ENCODE measurements at regions of chr17 and their contacts with region 1.

Region 1: GRCh38 chr17:35088881-35089585 is 25.5 kb upstream of the RFFL start:
- DNase-seq: peak; percentile 77 to 91 (median 84)
- H3K4me3 ChIP-seq: peak overlapping the region; percentile 57 to 99 (median 95)
- H3K27ac ChIP-seq: peak overlapping the region; percentile 89 to 100 (median 98)
- H3K27me3 ChIP-seq: no peaks in the 10 kb centered on the region
- CTCF ChIP-seq: peak; percentile 37 to 96 (median 86)

Region 2: GRCh38 chr17:34980681-34981537 is 108.1 kb before region 1 on chr17:
- intact Hi-C with region 1: loop called (anchors 5 kb)
- DNase-seq: peak in 9 of 10 donors; percentile 41 to 73 (median 61)
- H3K4me3 ChIP-seq: peak overlapping the region; percentile 55 to 100 (median 95)
- H3K27ac ChIP-seq: peak overlapping the region; percentile 77 to 99 (median 94)
- H3K27me3 ChIP-seq: no peaks in the 10 kb centered on the region
- CTCF ChIP-seq: peak in 33 of 56 donors; percentile 13 to 54 (median 33)

Region 3: DNA sequence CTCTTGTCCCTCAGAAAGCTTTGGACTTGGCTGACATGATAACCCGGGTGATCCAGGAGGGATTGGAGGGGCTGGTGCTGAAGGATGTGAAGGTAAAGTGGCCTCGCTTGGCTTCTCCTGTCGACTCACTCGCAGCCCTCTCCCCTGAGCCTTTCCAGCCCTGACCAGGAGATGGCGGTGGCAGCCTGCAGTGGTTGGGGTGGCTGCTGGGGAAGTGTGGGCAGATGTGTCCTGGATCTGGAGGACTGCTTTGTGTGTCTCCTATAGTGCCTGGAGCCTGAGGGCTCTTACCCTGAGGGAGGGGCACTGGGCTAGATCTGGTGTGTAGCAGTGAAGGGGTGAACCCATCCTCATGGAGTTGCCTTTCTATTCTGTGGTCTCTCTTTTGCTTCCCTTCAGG is 90.8 kb before region 1 on chr17:
- intact Hi-C with region 1: loop called (anchors 2 kb)
- DNase-seq: peak in 9 of 10 donors; percentile 69 to 85 (median 75)
- H3K4me3 ChIP-seq: peak overlapping the region in 1 of 59 donors; percentile 2
- H3K27ac ChIP-seq: peak overlapping the region in 58 of 59 donors; percentile 0 to 100 (median 79)
- H3K27me3 ChIP-seq: no peaks in the 10 kb centered on the region
- CTCF ChIP-seq: peak in 55 of 56 donors; percentile 44 to 93 (median 80)

Region 4: DNA sequence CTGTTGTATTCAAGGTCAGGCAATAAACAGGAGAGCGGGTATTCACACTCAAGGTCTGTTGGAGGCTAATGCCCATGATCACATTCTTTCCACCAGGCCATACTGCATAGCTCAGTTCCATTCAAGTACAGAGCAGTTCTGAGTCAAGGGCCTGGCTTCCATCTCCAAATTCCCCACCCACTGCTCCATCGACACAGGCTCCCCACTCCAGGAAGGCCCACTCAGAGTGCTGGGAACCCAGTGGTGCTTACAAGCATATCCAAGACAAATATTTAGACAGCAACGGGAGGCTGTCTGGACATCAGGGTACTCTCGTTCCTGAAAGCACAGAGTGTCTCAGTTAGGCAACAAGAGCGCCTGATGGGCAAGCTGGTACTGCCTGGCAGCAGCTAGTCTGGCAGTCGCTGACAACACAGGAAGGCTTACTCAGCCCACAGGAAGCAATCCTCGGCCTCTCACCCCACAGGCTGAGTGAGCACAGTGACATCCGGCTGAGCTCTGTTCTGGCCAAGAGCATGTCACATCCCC is 66.4 kb before region 1 on chr17:
- intact Hi-C with region 1: loop called (anchors 2 kb)
- DNase-seq: peak; percentile 29 to 95 (median 92)
- H3K4me3 ChIP-seq: peak overlapping the region in 11 of 59 donors; percentile 4 to 21 (median 12)
- H3K27ac ChIP-seq: peak overlapping the region; percentile 22 to 100 (median 97)
- H3K27me3 ChIP-seq: no peaks in the 10 kb centered on the region
- CTCF ChIP-seq: peak in 20 of 56 donors; percentile 6 to 48 (median 22)

Region 5: GRCh38 chr17:35063514-35064223 is 25.4 kb before region 1 on chr17 and contains the start of gene RFFL:
- intact Hi-C with region 1: loop called in 1 of 2 experiments (anchors 2 kb)
- DNase-seq: peak; percentile 53 to 96 (median 90)
- H3K4me3 ChIP-seq: peak within 1 kb of the TSS in 55 of 59 donors; percentile 2 to 58 (median 36)
- H3K27ac ChIP-seq: peak within 1 kb of the TSS; percentile 84 to 100 (median 97)
- H3K27me3 ChIP-seq: no peaks in the 10 kb centered on the region
- CTCF ChIP-seq: peak in 49 of 56 donors; percentile 17 to 67 (median 42)
- total RNA-seq, gene RFFL: 18.0 to 137 (median 45.5) TPM

Region 6: GRCh38 chr17:35141681-35142466 is 52.8 kb after region 1 on chr17 and contains the start of gene NLE1:
- intact Hi-C with region 1: loop called in 1 of 2 experiments (anchors 1 kb)
- DNase-seq: peak; percentile 69 to 89 (median 79)
- H3K4me3 ChIP-seq: peak within 1 kb of the TSS; percentile 57 to 99 (median 91)
- H3K27ac ChIP-seq: peak within 1 kb of the TSS in 9 of 59 donors; percentile 14 to 80 (median 57)
- H3K27me3 ChIP-seq: no peaks in the 10 kb centered on the region
- CTCF ChIP-seq: peak; percentile 75 to 98 (median 94)
- total RNA-seq, gene NLE1: 8.0 to 21.0 (median 15.2) TPM